ENCODE measurements at regions of chr9 and their contacts with region 1.

Region 1: DNA sequence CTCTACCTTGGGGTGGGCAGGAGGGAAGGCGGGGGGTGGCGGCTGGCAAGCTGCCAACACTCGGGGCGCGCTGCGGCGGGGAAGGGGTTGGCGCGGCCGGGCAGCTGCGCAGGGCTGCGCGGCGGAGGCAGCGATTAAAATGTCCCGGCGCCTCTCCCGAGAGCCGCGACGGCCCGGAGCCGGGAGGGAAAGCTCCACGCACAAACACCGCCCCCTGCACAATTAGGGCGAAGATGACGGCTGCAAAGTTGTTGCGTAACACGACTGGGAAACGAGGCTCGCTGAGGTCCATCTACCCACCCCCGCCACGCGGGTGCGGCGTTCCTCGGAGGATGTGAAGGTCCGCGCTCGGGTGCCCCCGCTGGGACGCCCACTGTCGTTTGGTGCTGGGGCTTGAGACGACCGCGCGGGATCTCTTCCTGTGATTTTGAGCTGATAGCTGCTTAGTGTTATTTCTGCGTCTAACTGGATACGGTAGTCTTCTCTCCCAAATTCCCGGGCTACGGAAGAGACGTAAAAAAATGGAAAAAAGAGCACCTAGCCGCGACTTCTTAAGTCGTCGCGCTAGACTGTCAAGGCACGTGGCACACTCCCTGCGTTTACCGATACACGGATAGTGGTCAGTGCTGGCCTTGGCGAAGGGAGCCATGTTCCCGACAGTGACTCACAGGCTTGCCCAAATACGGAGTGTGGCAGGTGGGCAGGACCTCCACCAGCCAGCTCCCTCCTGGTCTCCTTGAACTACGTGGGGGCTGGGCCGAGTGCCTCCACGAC is 958 bp upstream of the NFIL3 start:
- DNase-seq: peak; percentile 81 to 88
- ATAC-seq: peak; percentile 53

Region 2: GRCh38 chr9:90838100-90838499 is 586.5 kb before region 1 on chr9:
- intact Hi-C with region 1: no loop called
- DNase-seq: no peak
- ATAC-seq: no peak

Region 3: DNA sequence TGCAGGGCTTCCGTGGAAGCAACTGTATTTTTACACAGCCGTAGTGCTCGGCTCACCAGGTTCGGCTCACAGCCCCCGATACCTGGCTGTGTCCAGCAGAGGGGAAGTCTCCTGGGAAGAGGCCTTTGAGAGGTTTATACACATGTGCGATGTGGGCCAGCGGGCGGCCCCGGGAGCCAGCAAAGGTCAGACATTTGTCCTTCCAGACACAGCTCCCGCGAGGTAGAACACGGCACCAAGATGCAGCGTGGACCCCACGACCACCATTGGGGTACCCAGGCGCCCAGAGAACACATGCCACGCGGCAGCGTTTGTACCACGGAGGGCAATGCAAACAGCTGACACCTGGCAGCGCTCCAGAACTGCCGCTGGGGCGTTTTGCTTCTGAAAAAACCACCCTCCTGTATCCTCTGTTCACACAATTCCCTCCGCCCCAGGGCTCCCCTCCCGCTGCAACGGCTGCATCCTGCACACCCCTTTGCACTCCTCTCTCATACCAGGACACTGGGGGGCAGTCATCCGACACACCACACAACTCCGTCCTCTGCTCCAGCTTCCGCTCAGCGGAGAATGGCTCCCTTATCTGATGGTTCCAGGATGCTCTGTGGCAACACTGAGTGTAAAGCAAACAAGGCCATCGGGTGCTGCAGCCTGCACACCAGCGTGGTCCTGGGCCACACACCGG is 387.6 kb before region 1 on chr9:
- intact Hi-C with region 1: loop called in 1 of 2 experiments (anchors 5 kb)
- DNase-seq: peak; percentile 76 to 83
- ATAC-seq: peak; percentile 91